MCF 10A (cell line): ENCODE measurements at regions of chr13 and their contacts with region 1.

Region 1: DNA sequence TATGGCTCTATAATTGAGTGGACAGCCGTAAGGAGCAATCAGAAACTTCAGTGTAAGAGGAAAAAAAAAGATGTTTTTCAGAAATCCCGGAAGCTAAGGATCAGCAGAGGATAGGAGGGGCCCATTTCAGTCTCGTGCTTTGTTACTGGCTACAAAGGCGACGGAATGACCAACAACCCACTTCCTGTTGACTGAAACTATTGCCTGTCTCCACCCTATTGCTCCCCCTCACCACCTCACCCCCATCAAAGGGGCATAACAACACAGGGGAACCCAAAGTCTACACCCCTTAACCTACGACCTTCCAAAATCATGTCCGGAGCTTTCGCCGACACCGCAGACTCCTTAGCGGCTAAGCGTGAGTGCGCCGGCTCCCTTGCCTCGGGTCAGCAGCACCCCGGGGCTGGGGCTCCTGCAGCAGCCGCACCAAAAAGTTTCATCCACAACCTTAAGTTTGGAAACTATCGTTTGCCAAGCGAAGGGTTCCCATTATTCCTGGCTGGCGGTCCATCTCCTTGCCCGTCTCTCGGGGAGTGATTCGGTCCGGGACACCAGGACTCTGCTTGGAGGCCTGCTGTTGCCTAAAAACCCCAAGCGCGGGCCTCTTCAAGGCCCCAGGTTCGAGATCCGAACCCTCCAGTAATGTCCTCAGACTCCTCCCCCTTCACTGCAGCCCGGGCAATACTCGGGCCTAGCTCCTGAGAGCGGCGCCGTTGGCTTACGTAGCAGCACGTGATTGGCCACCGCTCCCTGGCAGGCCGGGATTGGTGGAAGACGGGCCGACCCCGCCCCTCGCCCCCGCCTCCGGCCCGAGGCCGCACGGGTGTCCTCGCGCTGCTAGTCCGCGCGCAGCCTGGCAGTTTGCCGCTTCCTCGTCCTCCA is at the start of gene TPP2:
- DNase-seq: peak; percentile 97
- H3K4me3 Mint-ChIP-seq: peak within 1 kb of the TSS; percentile 82
- H3K27ac Mint-ChIP-seq: peak within 1 kb of the TSS; percentile 96
- H3K4me1 Mint-ChIP-seq: peaks cover 42% of the 10 kb centered on the region
- H3K27me3 Mint-ChIP-seq: no peaks in the 10 kb centered on the region
- CTCF ChIP-seq: no peak
- total RNA-seq, gene TPP2: 35.1 and 44.2 TPM in 2 replicates

Region 2: DNA sequence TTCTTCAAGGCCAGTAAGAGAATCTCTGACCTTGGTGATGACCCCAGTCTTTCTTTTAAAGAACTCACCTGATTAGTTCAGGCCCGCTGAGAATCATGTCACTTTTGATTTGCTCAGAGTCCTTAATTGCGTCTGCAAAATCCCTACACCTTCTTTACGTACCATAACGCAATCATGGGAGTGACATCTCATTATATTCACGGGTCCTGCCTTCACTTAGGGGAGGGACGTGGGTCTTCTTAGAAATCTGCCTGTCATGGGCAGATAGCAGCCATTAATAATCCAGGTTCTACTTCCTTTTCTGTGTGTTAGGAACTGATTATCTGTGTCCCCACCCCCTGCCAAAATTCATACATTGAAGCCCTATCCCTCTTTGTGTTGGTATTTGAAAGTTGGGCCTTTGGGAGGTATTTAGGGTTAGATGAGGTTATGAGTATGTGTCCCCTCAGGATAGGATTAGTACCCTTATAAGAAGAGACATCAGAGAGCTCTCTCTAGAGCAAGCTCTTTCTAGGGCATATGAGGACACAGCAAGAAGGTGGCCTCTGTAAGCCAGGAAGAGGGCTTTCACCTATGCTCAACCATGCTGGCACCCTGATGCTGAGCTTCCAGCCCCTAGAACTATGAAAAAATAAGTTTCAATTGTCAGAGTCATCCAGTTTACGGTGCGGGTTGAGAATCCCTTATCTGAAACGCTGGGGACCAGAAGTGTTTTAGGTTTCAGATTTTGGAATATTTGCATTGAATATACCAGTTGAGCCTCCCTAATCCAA is 10.3 kb after region 1 on chr13:
- CTCF ChIA-PET with region 1: interaction called, 10 read pairs
- POLR2A ChIA-PET with region 1: interaction called, 38 read pairs
- intact Hi-C with region 1: no loop called
- DNase-seq: no peak
- H3K4me3 Mint-ChIP-seq: no peak overlapping the region
- H3K27ac Mint-ChIP-seq: no peak overlapping the region
- H3K4me1 Mint-ChIP-seq: peaks cover 10% of the 10 kb centered on the region
- H3K27me3 Mint-ChIP-seq: no peaks in the 10 kb centered on the region
- CTCF ChIP-seq: no peak

Region 3: GRCh38 chr13:102718746-102719145 is 122.4 kb after region 1 on chr13:
- CTCF ChIA-PET with region 1: interaction called, 4 read pairs
- POLR2A ChIA-PET with region 1: interaction called, 12 read pairs
- intact Hi-C with region 1: no loop called
- DNase-seq: no peak
- H3K4me3 Mint-ChIP-seq: no peak overlapping the region
- H3K27ac Mint-ChIP-seq: no peak overlapping the region
- H3K4me1 Mint-ChIP-seq: peaks cover 9% of the 10 kb centered on the region
- H3K27me3 Mint-ChIP-seq: no peaks in the 10 kb centered on the region
- CTCF ChIP-seq: no peak

Region 4: GRCh38 chr13:102800145-102801041 is 204.0 kb after region 1 on chr13:
- CTCF ChIA-PET with region 1: interaction called, 9 read pairs
- POLR2A ChIA-PET with region 1: interaction called, 50 read pairs
- intact Hi-C with region 1: loop called (anchors 1 kb)
- DNase-seq: peak; percentile 83
- H3K4me3 Mint-ChIP-seq: peak overlapping the region; percentile 92
- H3K27ac Mint-ChIP-seq: peak overlapping the region; percentile 63
- H3K4me1 Mint-ChIP-seq: peaks cover 21% of the 10 kb centered on the region
- H3K27me3 Mint-ChIP-seq: no peaks in the 10 kb centered on the region
- CTCF ChIP-seq: peak; percentile 83

Region 5: DNA sequence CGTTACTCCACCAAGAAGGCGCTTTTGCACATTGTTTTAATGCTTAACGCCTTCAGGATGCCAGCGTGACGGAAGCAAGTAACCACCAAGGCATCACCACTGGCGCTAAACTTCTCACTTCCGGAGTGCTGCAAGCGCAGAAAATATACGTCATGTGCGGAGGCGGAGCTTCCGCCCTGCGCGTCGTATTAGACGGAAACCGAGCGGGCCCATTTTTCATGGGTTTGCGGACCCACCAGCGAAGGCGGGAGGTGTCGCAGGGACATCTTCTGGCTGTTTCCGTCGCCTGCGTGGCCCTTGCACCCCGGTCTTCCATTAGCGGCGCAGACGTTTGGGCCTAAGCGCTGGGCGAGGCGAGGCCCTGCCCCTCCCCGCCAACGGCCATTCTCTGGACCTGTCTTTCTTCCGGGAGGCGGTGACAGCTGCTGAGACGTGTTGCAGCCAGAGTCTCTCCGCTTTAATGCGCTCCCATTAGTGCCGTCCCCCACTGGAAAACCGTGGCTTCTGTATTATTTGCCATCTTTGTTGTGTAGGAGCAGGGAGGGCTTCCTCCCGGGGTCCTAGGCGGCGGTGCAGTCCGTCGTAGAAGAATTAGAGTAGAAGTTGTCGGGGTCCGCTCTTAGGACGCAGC is 249.4 kb after region 1 on chr13 and contains the start of gene ERCC5:
- CTCF ChIA-PET with region 1: interaction called, 20 read pairs
- POLR2A ChIA-PET with region 1: interaction called, 156 read pairs
- intact Hi-C with region 1: loop called (anchors 1 kb)
- DNase-seq: peak; percentile 96
- H3K4me3 Mint-ChIP-seq: peak within 1 kb of the TSS; percentile 83
- H3K27ac Mint-ChIP-seq: peak within 1 kb of the TSS; percentile 90
- H3K4me1 Mint-ChIP-seq: peaks cover 20% of the 10 kb centered on the region
- H3K27me3 Mint-ChIP-seq: no peaks in the 10 kb centered on the region
- CTCF ChIP-seq: no peak
- total RNA-seq, gene ERCC5: 68.1 and 68.8 TPM in 2 replicates